AG04449 (cell line): ENCODE measurements at regions of chr2 and their contacts with region 1.

Region 1: GRCh38 chr2:60998628-60999545 is 18.6 kb upstream of the PEX13 start:
- DNase-seq: no peak
- H3K4me3 ChIP-seq: no peak overlapping the region
- CTCF ChIP-seq: peak; percentile 25

Region 2: GRCh38 chr2:60707750-60708371 is 291.0 kb before region 1 on chr2:
- CTCF ChIA-PET with region 1: interaction called, 171 read pairs
- POLR2A ChIA-PET with region 1: no interaction called
- DNase-seq: no peak
- H3K4me3 ChIP-seq: no peak overlapping the region
- CTCF ChIP-seq: peak; percentile 44

Region 3: DNA sequence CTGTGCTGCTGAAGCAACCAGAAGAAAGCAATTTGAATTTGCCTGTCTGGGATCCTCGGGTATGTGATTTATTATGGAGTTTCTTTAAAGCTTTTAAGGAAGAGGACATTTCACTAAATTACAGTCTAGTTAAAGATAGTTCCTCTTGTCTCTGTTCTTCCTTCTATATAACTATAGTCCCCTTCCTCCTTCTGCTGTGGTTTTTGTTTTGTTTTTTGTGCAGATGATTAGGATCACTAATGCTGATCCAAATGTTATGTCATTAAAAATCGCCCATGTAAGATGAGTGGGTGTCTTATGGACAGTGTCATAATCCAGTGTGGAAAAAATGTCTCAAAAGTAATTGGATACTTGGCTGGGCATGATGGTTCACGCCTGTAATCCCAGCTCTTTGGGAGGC is 218.2 kb before region 1 on chr2:
- CTCF ChIA-PET with region 1: interaction called, 12 read pairs
- POLR2A ChIA-PET with region 1: no interaction called
- DNase-seq: no peak
- H3K4me3 ChIP-seq: no peak overlapping the region
- CTCF ChIP-seq: no peak

Region 4: GRCh38 chr2:60806988-60807681 is 191.8 kb before region 1 on chr2:
- CTCF ChIA-PET with region 1: interaction called, 47 read pairs
- POLR2A ChIA-PET with region 1: no interaction called
- DNase-seq: peak; percentile 45
- H3K4me3 ChIP-seq: no peak overlapping the region
- CTCF ChIP-seq: no peak

Region 5: DNA sequence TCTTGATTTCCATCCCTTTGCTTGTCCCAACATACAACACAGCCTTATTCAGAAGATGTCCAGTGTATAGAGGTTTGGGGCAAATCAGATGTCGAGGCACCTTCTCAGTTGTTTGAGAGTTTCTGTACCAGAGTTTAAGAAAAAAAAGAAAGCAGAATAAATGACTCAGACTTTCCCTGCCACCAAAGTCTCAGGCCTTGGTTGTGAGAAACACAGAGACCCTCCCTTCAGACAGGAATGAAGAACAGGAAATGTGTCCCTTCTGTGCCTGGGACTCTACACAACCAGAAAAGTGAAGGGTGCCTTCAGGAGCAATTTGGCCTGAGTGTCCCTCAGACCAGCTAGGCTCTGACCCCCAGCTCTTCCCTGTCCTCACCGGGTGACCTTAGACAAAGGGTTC is 154.8 kb before region 1 on chr2:
- CTCF ChIA-PET with region 1: no interaction called
- POLR2A ChIA-PET with region 1: no interaction called
- DNase-seq: no peak
- H3K4me3 ChIP-seq: no peak overlapping the region
- CTCF ChIP-seq: no peak